Activated CD4-positive, alpha-beta T cell treated with anti-CD3 and anti-CD28 coated beads for 36 hours (primary cell): ENCODE measurements at regions of chr12 and their contacts with region 1.

Region 1: DNA sequence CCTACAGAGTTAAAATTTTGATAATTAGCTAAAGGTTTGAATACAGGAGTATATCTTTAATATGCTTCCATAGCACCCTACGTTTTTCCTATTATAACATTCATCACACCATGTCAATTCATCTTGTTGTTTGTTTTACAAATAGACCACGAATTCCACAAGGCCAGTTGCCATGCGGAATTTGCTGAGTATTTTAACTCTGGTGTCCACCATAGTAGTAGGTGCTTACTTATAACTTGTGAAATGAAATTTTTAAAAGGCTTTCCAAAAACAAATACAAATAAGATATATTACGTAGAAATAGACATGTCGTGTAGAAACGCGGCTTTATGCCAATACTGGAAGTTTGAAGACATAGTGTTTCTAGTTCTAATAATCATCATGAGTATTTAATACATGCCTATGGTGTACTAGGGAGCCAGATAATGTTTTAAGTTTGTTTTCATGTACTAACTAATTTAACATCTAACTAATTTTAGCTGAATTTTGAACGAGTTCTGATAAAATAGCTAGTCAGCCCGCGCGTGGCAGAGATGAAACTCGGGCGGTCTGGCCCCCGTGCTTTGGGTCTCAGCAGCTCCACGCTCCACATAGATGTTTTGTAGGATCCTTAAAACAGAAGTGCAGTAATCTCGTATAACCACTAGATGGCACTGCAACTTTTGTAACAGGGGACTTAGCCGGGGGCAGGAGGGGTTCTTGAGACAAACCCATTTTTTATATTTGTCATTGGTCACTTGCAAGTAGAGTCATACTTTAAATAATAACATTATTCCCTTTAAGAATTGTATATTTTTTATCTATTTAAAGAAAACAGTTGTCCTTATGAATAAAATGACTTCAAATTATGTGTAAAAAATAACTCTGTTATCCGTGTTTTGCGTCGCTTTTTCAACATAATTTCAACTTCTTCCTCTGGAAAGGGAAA is 10.2 kb downstream of the CD69 start:
- DNase-seq: peak; percentile 72
- ATAC-seq: peak; percentile 62
- H3K4me3 Mint-ChIP-seq: peak overlapping the region; percentile 53
- H3K27ac Mint-ChIP-seq: peak overlapping the region; percentile 51
- H3K4me1 Mint-ChIP-seq: peaks cover 46% of the 10 kb centered on the region
- H3K27me3 Mint-ChIP-seq: no peaks in the 10 kb centered on the region

Region 2: DNA sequence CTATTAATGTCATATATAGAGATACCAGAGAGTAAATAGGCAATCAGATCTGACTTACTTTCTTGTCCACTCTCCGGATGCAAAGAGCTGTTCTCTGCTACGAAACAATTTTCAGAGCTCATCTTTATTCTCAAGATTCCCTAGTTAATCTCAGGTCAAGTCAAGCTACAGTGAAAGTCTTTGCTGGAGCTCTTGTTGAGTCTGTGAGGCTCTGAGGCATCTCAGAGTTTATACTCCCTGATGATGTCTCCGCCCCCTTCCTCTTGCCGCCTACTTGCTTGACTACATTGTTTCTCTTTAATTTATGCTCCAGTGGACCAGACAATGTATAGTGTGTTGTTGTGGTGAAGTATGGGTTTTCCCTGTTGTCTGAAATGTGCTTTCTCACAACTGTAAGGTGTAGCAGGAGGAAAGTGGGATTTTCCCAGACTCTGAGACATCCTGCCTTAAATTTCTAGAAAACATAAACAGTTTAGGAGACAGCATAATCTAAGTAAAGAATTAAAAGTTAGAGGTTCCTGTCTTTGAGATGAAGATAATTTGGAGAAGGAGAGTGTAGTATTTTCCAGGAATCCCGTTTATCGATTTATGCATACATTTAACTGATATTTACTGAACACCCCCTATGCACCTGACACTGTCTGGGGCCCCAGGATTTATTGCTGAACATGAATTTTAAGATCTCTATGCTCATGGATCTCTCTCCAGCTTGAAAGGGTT is 10.3 kb after region 1 on chr12 and contains the start of gene CD69:
- CTCF ChIA-PET with region 1: interaction called, 125 read pairs
- POLR2A ChIA-PET with region 1: interaction called, 40 read pairs
- intact Hi-C with region 1: loop called (anchors 1 kb)
- DNase-seq: peak; percentile 87
- ATAC-seq: peak; percentile 55
- H3K4me3 Mint-ChIP-seq: peak within 1 kb of the TSS; percentile 99
- H3K27ac Mint-ChIP-seq: peak within 1 kb of the TSS; percentile 100
- H3K4me1 Mint-ChIP-seq: peaks cover 49% of the 10 kb centered on the region
- H3K27me3 Mint-ChIP-seq: no peaks in the 10 kb centered on the region
- total RNA-seq, gene CD69: 97.9 to 127 TPM

Region 3: DNA sequence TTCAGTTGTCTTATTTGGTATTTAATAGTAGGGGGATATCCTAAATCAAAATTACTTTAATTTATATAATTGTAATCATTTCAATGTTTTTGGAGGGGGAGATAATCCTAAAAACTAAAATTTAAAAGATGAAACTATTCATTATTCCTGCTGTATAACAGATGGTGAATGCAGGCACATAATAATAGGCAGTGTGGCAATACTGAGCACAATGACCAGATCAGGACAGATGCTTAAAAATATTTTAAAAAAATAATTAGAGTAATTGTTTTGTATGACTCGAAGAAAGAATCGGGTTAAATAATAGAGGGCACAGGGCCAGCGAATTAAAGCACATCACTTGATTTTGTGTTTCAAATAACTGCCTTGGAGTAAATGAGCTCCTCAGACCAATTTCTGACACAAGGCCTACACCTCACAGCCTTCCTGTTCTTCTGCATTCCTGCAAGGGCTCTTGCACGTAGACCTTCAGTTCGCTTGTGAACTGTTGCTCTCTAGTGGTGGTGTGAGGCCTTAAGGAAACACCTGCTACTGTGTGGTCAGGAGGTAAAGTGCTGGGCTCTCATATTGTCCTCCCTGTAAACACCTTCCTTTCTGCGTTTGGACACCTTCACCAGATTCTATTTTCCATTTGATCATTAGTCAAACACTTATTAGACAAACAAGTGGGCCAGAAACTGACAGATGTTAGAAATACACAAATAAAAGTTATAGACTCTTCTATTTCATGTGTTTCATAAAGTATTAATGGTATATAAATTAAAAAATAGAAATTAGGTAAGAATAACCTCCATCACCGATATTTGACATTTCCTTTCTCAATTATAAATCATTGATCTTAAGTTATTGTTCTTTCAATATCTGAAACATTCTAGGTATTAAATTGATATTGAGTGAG is 47.4 kb after region 1 on chr12:
- CTCF ChIA-PET with region 1: interaction called, 804 read pairs
- POLR2A ChIA-PET with region 1: interaction called, 191 read pairs
- intact Hi-C with region 1: loop called (anchors 1 kb)
- DNase-seq: peak; percentile 81
- ATAC-seq: peak; percentile 84
- H3K4me3 Mint-ChIP-seq: peak overlapping the region; percentile 72
- H3K27ac Mint-ChIP-seq: peak overlapping the region; percentile 92
- H3K4me1 Mint-ChIP-seq: peaks cover 42% of the 10 kb centered on the region
- H3K27me3 Mint-ChIP-seq: no peaks in the 10 kb centered on the region

Region 4: DNA sequence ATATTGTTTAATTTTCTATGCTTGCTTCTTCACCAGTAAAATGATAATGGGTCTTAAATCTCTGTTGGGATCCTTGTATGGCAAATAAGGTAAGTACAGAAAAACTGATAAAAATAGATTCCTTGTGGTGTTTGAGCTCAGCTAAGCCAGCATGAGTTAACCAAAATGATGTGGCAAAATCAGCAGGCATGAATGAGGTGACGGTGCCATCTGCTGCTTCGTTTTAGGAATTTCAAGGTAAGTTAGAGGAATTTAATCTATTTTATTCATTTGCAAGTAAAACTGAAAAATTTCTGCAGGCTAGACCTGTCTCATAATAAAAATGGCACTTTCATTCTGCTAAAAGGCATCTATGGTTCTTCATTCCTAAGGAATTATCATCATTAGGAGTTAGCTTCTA is 389.5 kb after region 1 on chr12:
- CTCF ChIA-PET with region 1: interaction called, 25 read pairs
- POLR2A ChIA-PET with region 1: no interaction called
- intact Hi-C with region 1: loop called (anchors 1 kb)
- DNase-seq: peak; percentile 66
- ATAC-seq: no peak
- H3K4me3 Mint-ChIP-seq: no peak overlapping the region
- H3K27ac Mint-ChIP-seq: no peak overlapping the region
- H3K4me1 Mint-ChIP-seq: peaks cover 2% of the 10 kb centered on the region
- H3K27me3 Mint-ChIP-seq: peaks cover 2% of the 10 kb centered on the region

Region 5: GRCh38 chr12:10190558-10191388 is 440.2 kb after region 1 on chr12:
- CTCF ChIA-PET with region 1: no interaction called
- POLR2A ChIA-PET with region 1: no interaction called
- intact Hi-C with region 1: loop called in 1 of 2 experiments (anchors 2 kb)
- DNase-seq: peak; percentile 68
- ATAC-seq: peak; percentile 100
- H3K4me3 Mint-ChIP-seq: no peak overlapping the region
- H3K27ac Mint-ChIP-seq: no peak overlapping the region
- H3K4me1 Mint-ChIP-seq: no peaks in the 10 kb centered on the region
- H3K27me3 Mint-ChIP-seq: peaks cover 11% of the 10 kb centered on the region

Region 6: DNA sequence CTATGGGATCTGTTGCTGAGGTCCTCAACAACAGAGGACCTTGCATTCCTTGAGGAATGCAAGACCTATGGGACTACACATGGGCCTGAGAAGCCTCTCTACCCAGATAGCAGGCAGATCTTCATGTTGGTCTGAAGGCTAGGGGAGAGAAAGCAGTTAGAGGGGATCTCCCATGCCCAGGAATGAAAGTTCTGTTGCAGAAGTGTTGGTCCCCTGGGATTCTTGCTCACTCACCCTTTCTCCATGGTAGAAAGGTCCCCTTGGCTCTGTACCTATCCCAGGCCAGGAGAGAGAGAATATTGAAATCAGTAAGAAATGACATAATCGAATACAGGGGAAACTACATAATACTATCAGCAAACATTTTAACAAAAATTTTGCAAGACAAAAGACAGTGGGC is 719.2 kb after region 1 on chr12:
- CTCF ChIA-PET with region 1: no interaction called
- POLR2A ChIA-PET with region 1: no interaction called
- intact Hi-C with region 1: no loop called
- DNase-seq: no peak
- ATAC-seq: no peak
- H3K4me3 Mint-ChIP-seq: no peak overlapping the region
- H3K27ac Mint-ChIP-seq: no peak overlapping the region
- H3K4me1 Mint-ChIP-seq: no peaks in the 10 kb centered on the region
- H3K27me3 Mint-ChIP-seq: peaks cover 12% of the 10 kb centered on the region